ENCODE measurements at regions of chr3 and their contacts with region 1.

Region 1: GRCh38 chr3:150227839-150228238 is 180.3 kb upstream of the TSC22D2 start:
- DNase-seq: peak in 37 of 42 donors; percentile 17 to 85 (median 57)

Region 2: DNA sequence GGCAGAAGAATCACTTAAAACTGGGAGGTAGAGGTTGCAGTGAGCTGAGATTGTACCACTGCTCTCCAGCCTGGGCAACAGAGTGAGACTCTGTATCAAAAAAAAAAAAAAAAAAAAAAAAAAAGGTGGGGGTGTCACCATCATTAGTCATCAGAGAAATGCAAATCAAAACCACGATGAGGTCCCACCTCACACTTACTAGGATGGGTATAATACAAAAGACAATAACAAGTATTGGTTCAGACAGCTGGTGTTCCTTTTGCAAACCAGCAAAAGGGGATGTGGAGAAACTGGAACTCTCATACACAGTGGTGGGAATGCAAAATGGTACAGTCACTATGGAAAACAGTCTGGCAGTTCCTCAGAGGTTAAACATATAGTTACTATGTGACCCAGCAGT is 101.6 kb after region 1 on chr3:
- intact Hi-C with region 1: no loop called
- DNase-seq: no peak

Region 3: DNA sequence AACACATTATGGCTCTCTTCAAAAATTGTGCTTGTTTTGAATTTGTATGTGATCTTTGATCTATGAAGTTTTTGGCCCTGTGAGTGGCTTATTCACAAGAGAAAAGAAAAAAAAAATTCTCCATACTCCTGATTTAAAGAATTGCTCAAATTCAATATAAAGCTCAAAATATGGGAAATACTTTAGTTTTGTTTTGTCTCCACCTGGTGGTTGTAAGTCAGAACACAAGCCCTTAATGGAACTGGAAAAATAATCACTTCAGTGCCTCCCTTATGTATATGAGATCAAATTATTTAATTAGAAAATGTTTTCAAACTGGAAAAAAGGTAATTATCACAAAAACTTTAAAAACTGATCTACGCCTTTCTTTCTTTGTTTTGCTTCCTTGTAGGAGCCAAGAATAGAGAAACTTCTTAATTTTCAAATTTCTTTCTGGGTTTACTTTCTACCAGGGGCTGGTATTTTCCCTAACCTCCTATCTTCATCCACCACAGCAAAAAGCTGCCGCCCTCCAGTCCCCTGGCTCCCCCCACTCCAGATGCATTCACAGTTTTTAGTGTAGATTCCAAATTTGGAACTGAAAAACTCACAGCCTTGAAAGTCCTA is 267.8 kb after region 1 on chr3:
- intact Hi-C with region 1: loop called (anchors 2 kb)
- DNase-seq: peak in 8 of 42 donors; percentile 13 to 73 (median 38)

Measured in head of caudate nucleus (tissue), 42 donors.